ENCODE measurements at regions of chr14 and their contacts with region 1.

Region 1: GRCh38 chr14:60266021-60266937 is 17.3 kb downstream of the PPM1A start:
- DNase-seq: no peak
- ATAC-seq: peak; percentile 46; the same call in 2 of the 3 replicates
- H3K4me3 ChIP-seq: no peak overlapping the region
- H3K27ac ChIP-seq: no peak overlapping the region
- H3K4me1 ChIP-seq: no peaks in the 10 kb centered on the region
- H3K27me3 ChIP-seq: no peaks in the 10 kb centered on the region
- CTCF ChIP-seq: peak; percentile 1 to 22 (median 14); a peak in 1 of 6 replicates
- EP300 ChIP-seq: no peak
- POLR2A ChIP-seq: no peak
- RAD21 ChIP-seq: no peak

Region 2: DNA sequence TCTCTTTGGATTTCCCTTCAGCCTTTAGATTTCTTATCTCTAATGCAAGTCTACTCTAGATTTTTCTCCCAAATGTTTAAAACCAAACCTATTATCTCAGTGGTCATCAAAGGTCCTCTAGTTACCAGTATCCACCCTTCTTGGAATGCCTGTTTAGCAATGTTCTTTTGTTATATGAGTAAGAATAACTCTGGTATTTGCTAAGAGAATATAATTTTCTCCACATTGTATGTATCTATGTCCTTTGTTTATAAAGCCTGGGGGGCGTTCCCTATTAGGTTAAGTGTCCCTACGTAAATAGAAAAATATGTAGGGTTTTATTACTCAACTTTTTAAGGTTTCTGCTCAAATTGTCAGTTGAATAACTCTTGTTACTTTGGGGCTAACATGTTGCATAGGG is 10.1 kb after region 1 on chr14:
- CTCF ChIA-PET with region 1: interaction called, 4 read pairs
- POLR2A ChIA-PET with region 1: interaction called, 4 read pairs
- RAD21 ChIA-PET with region 1: no interaction called
- SMC1A ChIA-PET with region 1: interaction called, 27 read pairs
- in situ Hi-C with region 1: no loop called
- intact Hi-C with region 1: no loop called
- DNase-seq: no peak
- ATAC-seq: no peak
- H3K4me3 ChIP-seq: no peak overlapping the region
- H3K27ac ChIP-seq: no peak overlapping the region
- H3K4me1 ChIP-seq: peaks cover 8% of the 10 kb centered on the region
- H3K27me3 ChIP-seq: no peaks in the 10 kb centered on the region
- CTCF ChIP-seq: no peak
- EP300 ChIP-seq: no peak
- POLR2A ChIP-seq: no peak
- RAD21 ChIP-seq: no peak